Activated T-helper 2 cell treated with anti-CD3 and anti-CD28 coated beads, Interferon-gamma antibody, Interleukin-2, Interleukin-4, amounts not matched to agents 10 μg/mL and 5 μg/mL and 100 μg/mL, durations not matched to agents 14 hours and 24 hours and 36 hours (primary cell): ENCODE measurements at regions of chr3 and their contacts with region 1.

Region 1: DNA sequence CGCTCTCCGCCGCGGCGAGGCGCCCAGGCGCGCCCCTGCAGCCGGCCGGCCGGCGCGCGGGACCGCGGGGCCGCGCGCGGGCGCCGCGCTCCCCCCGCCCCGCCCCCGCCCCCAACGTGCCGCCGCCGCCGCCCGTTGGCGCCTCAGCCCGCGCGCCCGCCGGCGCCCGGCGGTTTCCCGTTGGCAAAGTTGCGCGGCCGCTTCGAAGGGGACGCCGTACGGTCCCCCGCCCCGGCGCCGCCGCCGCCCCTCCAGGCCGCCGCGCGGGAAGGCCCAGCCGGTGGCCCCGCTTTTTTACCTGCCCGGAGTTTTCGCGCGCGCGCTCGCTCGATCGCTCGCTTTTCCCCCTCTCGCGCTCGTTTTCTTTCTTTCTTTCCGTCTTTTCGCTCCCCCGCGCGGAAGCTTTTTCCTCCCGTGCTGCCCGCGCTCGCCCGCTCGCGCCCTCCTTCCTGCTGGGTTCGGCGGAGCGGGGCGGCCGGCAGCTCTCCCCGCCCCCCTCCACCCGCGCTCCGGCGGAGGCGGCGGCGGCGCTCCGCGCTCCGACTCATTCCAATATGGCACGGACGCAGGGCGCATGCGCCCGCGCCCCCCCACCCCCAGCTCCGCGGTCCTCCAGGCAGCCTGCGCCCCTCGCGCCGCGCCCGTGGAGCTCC is at the start of gene SFMBT1:
- DNase-seq: no peak
- H3K4me3 Mint-ChIP-seq: peak within 1 kb of the TSS; percentile 91
- H3K27ac Mint-ChIP-seq: peak within 1 kb of the TSS; percentile 91
- H3K4me1 Mint-ChIP-seq: peaks cover 35% of the 10 kb centered on the region
- H3K27me3 Mint-ChIP-seq: peaks cover 13% of the 10 kb centered on the region
- total RNA-seq, gene SFMBT1: 23.4 and 24.3 TPM in 2 replicates

Region 2: GRCh38 chr3:52663098-52663497 is 382.5 kb before region 1 on chr3:
- intact Hi-C with region 1: no loop called
- DNase-seq: no peak
- H3K4me3 Mint-ChIP-seq: no peak overlapping the region
- H3K27ac Mint-ChIP-seq: no peak overlapping the region
- H3K4me1 Mint-ChIP-seq: peaks cover 4% of the 10 kb centered on the region
- H3K27me3 Mint-ChIP-seq: no peaks in the 10 kb centered on the region

Region 3: DNA sequence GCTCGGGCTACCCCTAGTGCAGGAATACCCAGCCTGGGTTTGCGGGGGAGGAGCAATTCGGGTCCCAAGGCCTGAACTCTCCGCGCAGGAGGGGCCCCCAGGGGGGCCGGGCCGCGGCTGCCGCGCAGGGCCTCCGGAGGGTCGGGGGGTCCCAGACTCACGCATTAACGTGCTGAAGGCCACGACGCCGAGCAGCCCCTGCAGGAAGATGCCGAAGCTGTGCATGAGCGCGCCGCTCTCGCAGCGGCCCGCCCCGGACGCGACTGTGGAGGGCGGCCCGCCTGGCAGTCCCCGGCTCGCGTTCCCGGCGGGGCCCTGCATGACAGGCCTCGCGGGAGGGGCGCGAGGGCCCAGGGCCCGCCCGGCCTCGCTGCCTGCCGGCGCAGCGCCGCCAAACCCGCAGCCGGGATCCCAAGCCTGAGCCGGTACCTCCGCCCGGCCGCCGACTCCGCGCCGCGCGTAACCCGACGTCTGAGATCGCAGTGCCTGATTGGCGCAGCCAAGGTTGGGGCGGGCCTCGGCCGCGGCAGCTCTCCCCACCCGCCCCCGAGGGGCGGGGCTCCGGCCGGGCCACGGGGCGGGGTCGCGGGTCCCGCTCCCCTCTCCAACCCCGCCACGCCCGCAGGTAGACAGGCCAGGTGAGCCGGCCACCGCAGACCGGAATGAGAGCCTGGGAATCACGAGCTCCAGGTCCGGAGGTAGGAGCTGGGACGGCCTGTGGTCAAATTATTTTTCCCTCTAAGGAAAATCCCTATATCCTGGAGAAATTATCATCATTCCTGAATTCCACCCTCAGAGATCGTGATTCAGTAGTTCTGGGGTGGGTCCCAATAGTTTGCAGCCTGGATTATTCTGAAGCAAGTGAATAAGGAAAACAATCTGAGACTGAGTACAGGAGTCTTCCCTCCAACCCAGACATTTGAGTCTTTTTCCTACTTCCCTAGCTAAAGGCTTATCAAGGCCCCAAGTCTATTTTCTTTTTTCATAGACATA is 148.2 kb before region 1 on chr3 and contains the start of gene STIMATE:
- intact Hi-C with region 1: loop called (anchors 2 kb)
- DNase-seq: peak; percentile 85
- H3K4me3 Mint-ChIP-seq: peak within 1 kb of the TSS; percentile 99
- H3K27ac Mint-ChIP-seq: peak within 1 kb of the TSS; percentile 72
- H3K4me1 Mint-ChIP-seq: peaks cover 40% of the 10 kb centered on the region
- H3K27me3 Mint-ChIP-seq: no peaks in the 10 kb centered on the region
- total RNA-seq, gene STIMATE: 17.4 and 17.6 TPM in 2 replicates

Region 4: DNA sequence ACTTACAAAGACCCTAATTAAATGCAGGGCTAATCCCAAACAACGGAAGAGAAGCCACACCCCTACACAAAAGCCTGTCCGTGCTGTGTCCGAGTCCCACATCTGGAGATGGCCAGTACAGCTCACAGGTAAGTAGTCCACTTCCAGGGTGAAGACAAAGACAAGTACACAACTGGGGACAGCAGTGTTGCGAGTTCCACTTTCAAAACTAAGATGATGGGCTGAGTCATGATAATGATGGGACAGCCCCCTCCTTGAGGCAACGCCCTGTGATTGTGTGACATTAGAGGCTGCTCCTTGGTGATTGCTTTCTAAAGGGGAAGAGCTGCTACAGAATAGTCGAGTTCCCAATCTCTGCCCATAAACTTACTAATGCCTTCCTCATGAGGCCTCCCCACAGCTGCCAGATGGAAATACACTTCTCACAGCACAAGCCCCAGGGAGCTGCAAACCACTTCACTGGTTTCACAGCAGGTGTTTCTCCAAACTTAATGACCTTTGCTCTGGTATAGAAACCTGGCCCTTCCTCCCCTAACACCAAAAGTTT is 57.0 kb after region 1 on chr3:
- intact Hi-C with region 1: loop called (anchors 1 kb)
- DNase-seq: peak; percentile 59
- H3K4me3 Mint-ChIP-seq: peak overlapping the region; percentile 71
- H3K27ac Mint-ChIP-seq: peak overlapping the region; percentile 88
- H3K4me1 Mint-ChIP-seq: peaks cover 54% of the 10 kb centered on the region
- H3K27me3 Mint-ChIP-seq: no peaks in the 10 kb centered on the region